Ascending aorta (tissue), 2 donors: ENCODE measurements at regions of chr9 and their contacts with region 1.

Region 1: GRCh38 chr9:129177791-129178559 is at the start of gene IER5L:
- DNase-seq: peak; percentile 89 to 98
- H3K4me3 ChIP-seq: peak within 1 kb of the TSS; percentile 81 to 100
- H3K27ac ChIP-seq: peak within 1 kb of the TSS; percentile 97 to 100
- H3K4me1 ChIP-seq: peaks cover 9 to 21% of the 10 kb centered on the region in 2 donors
- H3K27me3 ChIP-seq: no peaks in the 10 kb centered on the region
- CTCF ChIP-seq: no peak
- total RNA-seq, gene IER5L: 86.1 TPM

Region 2: GRCh38 chr9:129202613-129203555 is 24.9 kb after region 1 on chr9:
- intact Hi-C with region 1: loop called (anchors 1 kb)
- DNase-seq: peak; percentile 42 to 92
- H3K4me3 ChIP-seq: peak overlapping the region; percentile 54 to 80
- H3K27ac ChIP-seq: peak overlapping the region; percentile 81 to 96
- H3K4me1 ChIP-seq: peaks cover 5 to 8% of the 10 kb centered on the region in 2 donors
- H3K27me3 ChIP-seq: no peaks in the 10 kb centered on the region
- CTCF ChIP-seq: no peak

Region 3: DNA sequence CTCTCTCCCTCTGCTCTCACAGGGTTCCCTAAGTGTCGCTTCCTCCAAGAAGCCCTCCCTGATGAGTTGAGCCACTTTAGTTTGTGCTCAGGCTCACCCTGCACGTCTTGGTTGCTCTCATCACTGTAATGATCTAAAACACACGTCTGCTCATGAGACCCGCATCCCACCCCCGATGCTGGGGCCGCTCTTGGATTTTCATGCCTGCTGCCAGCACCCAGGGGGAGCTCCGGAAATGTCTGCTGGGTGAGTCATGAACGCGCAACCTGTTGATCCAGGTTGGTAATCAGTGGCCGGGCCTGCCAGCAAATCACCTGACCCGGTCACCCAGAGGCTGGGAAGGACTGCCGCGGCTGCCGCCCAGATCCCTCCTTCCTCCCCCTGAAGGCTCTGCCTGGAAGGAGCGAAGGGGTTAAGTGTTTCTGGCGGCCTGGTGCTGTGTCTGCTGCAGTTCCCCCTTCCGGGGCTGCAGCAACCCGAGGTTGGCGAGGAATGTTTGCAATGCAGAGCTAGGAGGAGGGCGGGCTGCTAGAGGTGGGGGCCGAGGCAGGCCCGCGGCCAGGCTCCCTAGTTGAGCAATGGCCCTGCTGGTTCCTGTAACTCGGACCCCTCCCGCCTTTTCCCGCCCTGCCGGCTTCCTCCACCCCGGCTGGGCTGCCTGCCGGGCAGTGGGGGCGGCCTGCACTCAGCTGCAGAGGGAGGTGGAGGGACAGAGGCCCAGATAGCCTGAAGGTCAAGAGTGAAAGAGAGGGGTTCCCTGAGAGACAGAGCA is 156.2 kb after region 1 on chr9:
- intact Hi-C with region 1: loop called (anchors 5 kb)
- DNase-seq: peak; percentile 74 to 96
- H3K4me3 ChIP-seq: peak overlapping the region; percentile 9 to 19
- H3K27ac ChIP-seq: peak overlapping the region; percentile 84 to 96
- H3K4me1 ChIP-seq: peaks cover 33 to 52% of the 10 kb centered on the region in 2 donors
- H3K27me3 ChIP-seq: no peaks in the 10 kb centered on the region
- CTCF ChIP-seq: no peak

Region 4: GRCh38 chr9:129460323-129461261 is 282.6 kb after region 1 on chr9:
- intact Hi-C with region 1: loop called (anchors 1 kb)
- DNase-seq: peak; percentile 93 to 99
- H3K4me3 ChIP-seq: peak overlapping the region; percentile 47 to 73
- H3K27ac ChIP-seq: peak overlapping the region; percentile 99
- H3K4me1 ChIP-seq: peaks cover 30 to 51% of the 10 kb centered on the region in 2 donors
- H3K27me3 ChIP-seq: no peaks in the 10 kb centered on the region
- CTCF ChIP-seq: peak in 1 of 3 experiments; percentile 34

Region 5: DNA sequence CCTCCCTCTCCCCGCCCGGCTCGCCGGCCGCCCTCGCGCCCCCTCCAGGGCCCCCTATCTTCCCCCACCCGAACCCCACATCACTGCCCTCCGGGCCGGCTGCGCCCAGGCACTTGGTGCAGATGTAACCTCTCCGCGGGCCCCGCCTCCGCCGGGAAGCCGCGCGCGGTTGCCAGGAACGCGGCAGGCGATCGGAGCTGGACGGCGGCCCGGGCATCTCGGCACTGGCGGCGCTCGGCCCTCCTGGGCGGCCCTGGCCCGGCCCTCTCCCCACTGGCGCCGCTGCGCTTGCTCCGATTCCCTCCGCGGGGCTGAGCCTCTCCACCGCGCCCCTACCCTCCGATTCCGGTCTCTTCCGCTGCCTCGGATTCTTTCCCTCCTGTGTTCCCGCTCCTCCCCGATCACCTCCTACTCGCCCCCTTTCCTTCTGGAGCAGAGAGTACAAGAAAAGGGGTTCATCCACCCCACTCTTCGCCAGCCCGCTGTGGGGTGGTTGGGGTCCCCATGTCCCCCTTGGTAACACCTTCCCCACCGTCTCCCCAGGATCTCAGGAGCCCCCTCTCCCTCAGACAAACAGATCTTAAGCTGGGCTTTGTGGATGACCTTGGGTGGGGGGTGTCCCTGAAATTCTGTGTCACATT is 372.3 kb after region 1 on chr9:
- intact Hi-C with region 1: loop called (anchors 5 kb)
- DNase-seq: peak in 1 of 2 donors; percentile 93
- H3K4me3 ChIP-seq: peak overlapping the region; percentile 52 to 82
- H3K27ac ChIP-seq: peak overlapping the region; percentile 83 to 94
- H3K4me1 ChIP-seq: peaks cover 17 to 18% of the 10 kb centered on the region in 2 donors
- H3K27me3 ChIP-seq: no peaks in the 10 kb centered on the region
- CTCF ChIP-seq: no peak